ENCODE measurements at regions of chr7 and their contacts with region 1.

Region 1: DNA sequence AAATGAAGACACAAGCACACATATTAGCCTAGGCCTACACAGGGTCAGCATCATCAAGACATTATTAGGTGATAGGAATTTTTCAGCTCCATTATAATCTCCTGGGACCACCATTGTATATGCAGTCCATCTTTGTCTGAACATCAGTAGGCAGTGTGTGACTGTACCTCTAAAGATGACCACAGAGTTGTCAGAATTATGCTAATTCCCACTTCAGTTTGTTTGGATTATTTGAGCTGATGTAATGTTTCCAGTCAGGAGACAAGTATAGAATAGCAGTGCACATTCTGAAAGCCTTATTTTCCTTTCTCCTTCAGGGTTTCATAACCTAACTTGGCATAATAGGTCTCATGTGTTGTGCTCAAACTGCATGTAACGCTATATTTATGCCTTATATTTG is 306.4 kb downstream of the NXPH1 start:
- DNase-seq: no peak
- H3K4me3 ChIP-seq: no peak overlapping the region
- H3K27ac ChIP-seq: no peak overlapping the region
- H3K4me1 ChIP-seq: no peaks in the 10 kb centered on the region
- H3K27me3 ChIP-seq: no peaks in the 10 kb centered on the region
- CTCF ChIP-seq: no peak

Region 2: GRCh38 chr7:8831376-8831775 is 91.5 kb after region 1 on chr7:
- CTCF ChIA-PET with region 1: no interaction called
- dilution Hi-C with region 1: no loop called
- in situ Hi-C with region 1: loop called in 1 of 2 experiments (anchors 25 kb)
- intact Hi-C with region 1: no loop called
- DNase-seq: no peak
- H3K4me3 ChIP-seq: no peak overlapping the region
- H3K27ac ChIP-seq: no peak overlapping the region
- H3K4me1 ChIP-seq: no peaks in the 10 kb centered on the region
- H3K27me3 ChIP-seq: no peaks in the 10 kb centered on the region
- CTCF ChIP-seq: no peak